ENCODE measurements at regions of chr17 and their contacts with region 1.

Region 1: DNA sequence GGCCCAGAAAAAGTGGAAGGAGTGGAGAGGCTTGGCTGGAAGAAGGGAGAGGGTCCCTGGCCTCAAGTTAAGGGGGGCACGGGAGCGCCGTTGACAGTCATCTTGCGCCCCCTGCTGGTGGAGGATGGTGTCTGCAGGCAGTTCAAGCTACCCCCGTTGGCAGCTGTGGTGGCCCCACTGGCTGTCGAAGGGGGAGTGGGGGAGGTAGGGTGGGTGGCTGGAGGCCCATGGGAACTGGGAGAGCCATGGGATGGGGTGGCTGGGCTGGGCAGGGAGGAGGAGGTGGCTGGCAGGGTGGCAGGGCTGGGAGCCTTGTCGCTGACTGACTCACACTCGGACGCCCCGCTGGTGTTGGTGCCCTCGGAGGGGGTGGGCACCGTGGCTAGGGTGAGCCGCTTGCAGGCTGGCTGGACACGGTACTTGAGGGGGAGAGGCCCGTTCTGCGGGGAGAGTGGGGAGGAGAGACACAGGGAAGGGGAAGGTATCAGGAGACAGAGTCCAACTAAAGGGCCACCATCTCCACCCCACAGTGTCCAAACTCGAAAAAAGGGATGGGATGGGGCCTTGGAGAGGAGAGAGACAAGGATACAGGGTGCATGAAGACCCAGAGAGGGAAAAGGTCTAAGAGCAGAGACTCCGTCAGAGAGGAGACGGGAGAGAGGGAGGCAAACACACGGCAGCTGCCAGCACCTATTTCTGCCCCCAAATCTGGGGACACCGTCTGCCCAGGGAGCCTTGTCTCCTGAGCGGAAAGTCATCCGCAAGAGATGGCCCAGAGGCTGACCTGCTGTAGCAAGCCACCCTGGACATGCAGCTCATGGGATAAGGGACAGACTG is 5.2 kb downstream of the CISD3 start:
- DNase-seq: no peak
- H3K4me3 ChIP-seq: no peak overlapping the region
- H3K27ac ChIP-seq: no peak overlapping the region
- H3K4me1 ChIP-seq: peaks cover 11% of the 10 kb centered on the region
- H3K27me3 ChIP-seq: no peaks in the 10 kb centered on the region
- CTCF ChIP-seq: peak; percentile 98

Region 2: DNA sequence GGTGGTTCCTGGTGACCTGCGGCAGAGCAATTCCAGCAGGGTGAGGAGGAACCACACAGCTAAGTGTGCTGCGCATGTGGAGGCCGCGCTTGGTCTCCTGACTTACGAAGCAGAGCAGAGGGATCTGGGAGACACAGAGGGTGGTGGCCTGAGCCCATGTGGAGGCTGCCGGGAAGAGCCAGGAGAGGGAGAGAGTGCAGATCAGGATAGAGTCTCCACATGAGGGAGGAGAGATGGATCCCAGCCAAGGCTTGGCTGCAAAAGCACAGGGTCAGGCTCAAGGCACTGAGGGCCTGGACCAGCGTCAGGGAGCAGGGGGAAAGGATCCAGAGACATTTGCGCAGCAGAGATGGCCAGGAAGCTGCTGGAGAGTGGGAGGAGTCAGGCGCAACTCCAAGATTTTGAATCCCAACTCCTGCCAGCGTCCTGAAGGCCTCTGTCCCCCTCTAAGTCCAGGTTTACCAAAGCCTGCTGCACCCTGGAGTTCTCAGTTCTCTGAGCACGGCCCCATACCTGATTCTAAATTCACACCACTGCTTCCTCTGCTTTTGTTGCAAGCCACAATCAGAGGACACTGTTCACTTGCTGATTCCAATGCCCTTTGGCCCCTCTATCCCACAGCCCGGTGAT is 41.6 kb before region 1 on chr17:
- CTCF ChIA-PET with region 1: interaction called, 11 read pairs
- POLR2A ChIA-PET with region 1: no interaction called
- intact Hi-C with region 1: no loop called
- DNase-seq: no peak
- H3K4me3 ChIP-seq: no peak overlapping the region
- H3K27ac ChIP-seq: no peak overlapping the region
- H3K4me1 ChIP-seq: no peaks in the 10 kb centered on the region
- H3K27me3 ChIP-seq: no peaks in the 10 kb centered on the region
- CTCF ChIP-seq: no peak